GM12878 (cell line): ENCODE measurements at regions of chr10 and their contacts with region 1.

Region 1: GRCh38 chr10:71812016-71812912 is 38.8 kb downstream of the PSAP start:
- DNase-seq: no peak
- ATAC-seq: peak; percentile 99
- H3K4me3 ChIP-seq: no peak overlapping the region
- H3K27ac ChIP-seq: no peak overlapping the region
- H3K4me1 ChIP-seq: peaks cover 3% of the 10 kb centered on the region; the same call in 1 of the 2 replicates
- H3K27me3 ChIP-seq: no peaks in the 10 kb centered on the region
- CTCF ChIP-seq: peak; percentile 81 to 89 (median 82)
- EP300 ChIP-seq: no peak
- POLR2A ChIP-seq: peak; percentile 32; the same call in 1 of the 2 replicates
- RAD21 ChIP-seq: peak; percentile 84

Region 2: DNA sequence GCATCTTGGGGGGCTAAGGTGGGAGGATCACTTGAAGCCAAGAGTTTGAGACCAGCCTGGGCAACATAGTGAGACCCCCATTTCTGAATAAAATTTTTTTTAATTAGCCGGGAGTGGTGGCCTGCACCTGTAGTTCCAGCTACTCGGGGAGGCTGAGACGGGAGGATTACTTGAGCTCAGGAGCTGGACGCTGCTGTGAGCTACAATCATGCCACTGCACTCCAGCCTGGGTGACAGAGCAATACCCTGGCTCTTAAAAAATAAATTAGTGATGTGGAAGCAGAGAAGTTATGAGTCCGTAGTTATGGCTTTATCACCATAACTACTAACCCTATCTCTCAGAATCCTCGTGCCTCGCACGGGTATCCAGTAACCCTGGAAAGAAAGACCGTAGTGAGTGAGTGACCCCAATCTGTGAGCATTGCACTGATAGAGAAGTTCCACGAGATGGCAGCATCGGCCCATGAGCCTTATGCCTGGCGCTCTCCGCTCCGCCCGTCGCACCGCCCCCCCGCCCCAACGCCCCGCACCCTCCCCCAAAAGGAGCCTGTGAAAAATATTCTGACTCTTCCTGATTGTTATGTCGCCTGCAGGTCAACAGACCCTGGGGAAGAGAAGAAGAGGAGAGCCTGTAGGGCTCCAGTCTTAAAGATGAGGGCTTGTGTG is 498.1 kb before region 1 on chr10:
- CTCF ChIA-PET with region 1: interaction called, 3 read pairs
- POLR2A ChIA-PET with region 1: no interaction called
- RAD21 ChIA-PET with region 1: interaction called, 4 read pairs
- SMC1A ChIA-PET with region 1: interaction called, 3 read pairs
- in situ Hi-C with region 1: loop called (anchors 5 kb)
- intact Hi-C with region 1: loop called (anchors 2 kb)
- DNase-seq: no peak
- ATAC-seq: peak; percentile 55
- H3K4me3 ChIP-seq: no peak overlapping the region
- H3K27ac ChIP-seq: no peak overlapping the region
- H3K4me1 ChIP-seq: peaks cover 12% of the 10 kb centered on the region
- H3K27me3 ChIP-seq: no peaks in the 10 kb centered on the region
- CTCF ChIP-seq: peak; percentile 62 to 91 (median 76)
- EP300 ChIP-seq: no peak
- POLR2A ChIP-seq: no peak
- RAD21 ChIP-seq: peak; percentile 74

Region 3: DNA sequence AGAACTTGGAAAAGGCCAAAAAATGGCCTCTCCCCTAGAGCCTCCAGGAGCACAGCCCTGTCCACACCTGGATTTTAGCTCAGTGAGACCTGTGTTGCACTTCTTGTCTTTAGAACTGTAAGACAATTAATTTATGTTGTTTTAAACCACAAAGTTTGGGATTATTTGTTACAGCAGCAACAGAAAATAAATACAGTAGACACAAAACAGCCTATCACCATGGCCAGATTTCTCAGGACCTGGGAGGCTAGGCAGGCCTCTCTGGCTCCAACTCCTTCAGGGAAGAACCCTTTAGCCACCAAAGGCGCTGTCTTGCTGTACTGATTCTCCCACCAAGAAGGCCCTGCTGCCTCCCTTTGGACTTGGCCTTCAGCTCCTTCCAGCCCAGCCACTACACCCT is 92.9 kb after region 1 on chr10:
- CTCF ChIA-PET with region 1: no interaction called
- POLR2A ChIA-PET with region 1: no interaction called
- RAD21 ChIA-PET with region 1: no interaction called
- SMC1A ChIA-PET with region 1: no interaction called
- in situ Hi-C with region 1: no loop called
- intact Hi-C with region 1: no loop called
- DNase-seq: no peak
- ATAC-seq: no peak
- H3K4me3 ChIP-seq: no peak overlapping the region
- H3K27ac ChIP-seq: no peak overlapping the region
- H3K4me1 ChIP-seq: peaks cover 13% of the 10 kb centered on the region
- H3K27me3 ChIP-seq: no peaks in the 10 kb centered on the region
- CTCF ChIP-seq: no peak
- EP300 ChIP-seq: no peak
- POLR2A ChIP-seq: no peak
- RAD21 ChIP-seq: no peak